GM18951 (cell line): ENCODE measurements at regions of chr2 and their contacts with region 1.

Region 1: GRCh38 chr2:16756831-16757644 is 91.4 kb upstream of the CYRIA start:
- POLR2A ChIP-seq: no peak

Region 2: GRCh38 chr2:16625201-16625729 is 131.8 kb before region 1 on chr2:
- in situ Hi-C with region 1: loop called (anchors 10 kb)
- POLR2A ChIP-seq: no peak

Region 3: GRCh38 chr2:17309741-17310339 is 552.8 kb after region 1 on chr2:
- in situ Hi-C with region 1: loop called (anchors 25 kb)
- POLR2A ChIP-seq: no peak